Activated CD8-positive, alpha-beta T cell treated with anti-CD3 and anti-CD28 coated beads, Interleukin-2, amount 10 ng/mL, durations not matched to agents 7 days and 5 days (primary cell): ENCODE measurements at regions of chr1 and their contacts with region 1.

Region 1: DNA sequence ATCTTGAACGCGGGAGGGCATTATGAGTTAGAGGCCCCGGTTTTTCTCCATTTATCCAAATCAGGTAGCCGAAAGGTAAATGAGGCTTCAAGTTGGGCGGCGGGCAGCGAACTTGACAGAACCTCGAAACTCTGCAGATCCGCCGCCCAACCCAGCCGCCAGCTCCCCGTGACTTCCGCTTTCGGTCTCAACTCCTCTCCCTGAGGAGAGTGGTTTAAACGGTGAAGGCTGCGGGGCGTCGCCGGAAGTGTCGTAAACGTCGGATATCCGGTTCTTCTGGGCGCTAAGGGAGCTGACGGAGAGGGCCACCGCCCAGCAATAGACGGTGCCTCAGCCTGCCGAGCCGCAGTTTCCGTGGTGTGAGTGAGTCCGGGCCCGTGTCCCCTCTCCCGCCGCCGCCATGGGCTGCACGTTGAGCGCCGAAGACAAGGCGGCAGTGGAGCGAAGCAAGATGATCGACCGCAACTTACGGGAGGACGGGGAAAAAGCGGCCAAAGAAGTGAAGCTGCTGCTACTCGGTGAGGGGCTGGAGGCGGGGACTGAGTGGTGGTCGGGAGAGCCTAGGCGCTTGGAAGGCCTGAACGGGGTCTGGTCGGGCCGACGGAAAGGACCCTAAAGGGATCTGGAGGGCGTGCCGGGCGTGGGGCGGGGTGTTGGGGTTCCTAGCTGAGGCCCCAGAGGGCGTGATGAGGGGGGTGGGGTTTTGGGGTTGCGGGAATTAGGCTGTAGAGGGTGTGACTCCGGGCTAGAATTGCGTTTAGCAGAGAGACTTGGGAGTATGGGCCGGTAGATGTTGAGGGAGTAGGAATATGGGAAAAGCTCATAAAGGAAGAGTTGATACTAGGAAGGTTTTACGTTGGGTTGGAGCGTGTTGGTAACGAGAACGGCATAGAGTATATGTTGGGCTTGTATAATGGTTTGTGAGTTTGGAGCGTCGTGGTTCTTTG is at the start of gene GNAI3:
- DNase-seq: peak; percentile 98
- ATAC-seq: peak; percentile 92
- H3K4me3 Mint-ChIP-seq: peak within 1 kb of the TSS; percentile 97
- H3K27ac Mint-ChIP-seq: peak within 1 kb of the TSS; percentile 98
- H3K4me1 Mint-ChIP-seq: peaks cover 44% of the 10 kb centered on the region
- H3K27me3 Mint-ChIP-seq: no peaks in the 10 kb centered on the region
- total RNA-seq, gene GNAI3: 9.6 to 10.2 TPM

Region 2: DNA sequence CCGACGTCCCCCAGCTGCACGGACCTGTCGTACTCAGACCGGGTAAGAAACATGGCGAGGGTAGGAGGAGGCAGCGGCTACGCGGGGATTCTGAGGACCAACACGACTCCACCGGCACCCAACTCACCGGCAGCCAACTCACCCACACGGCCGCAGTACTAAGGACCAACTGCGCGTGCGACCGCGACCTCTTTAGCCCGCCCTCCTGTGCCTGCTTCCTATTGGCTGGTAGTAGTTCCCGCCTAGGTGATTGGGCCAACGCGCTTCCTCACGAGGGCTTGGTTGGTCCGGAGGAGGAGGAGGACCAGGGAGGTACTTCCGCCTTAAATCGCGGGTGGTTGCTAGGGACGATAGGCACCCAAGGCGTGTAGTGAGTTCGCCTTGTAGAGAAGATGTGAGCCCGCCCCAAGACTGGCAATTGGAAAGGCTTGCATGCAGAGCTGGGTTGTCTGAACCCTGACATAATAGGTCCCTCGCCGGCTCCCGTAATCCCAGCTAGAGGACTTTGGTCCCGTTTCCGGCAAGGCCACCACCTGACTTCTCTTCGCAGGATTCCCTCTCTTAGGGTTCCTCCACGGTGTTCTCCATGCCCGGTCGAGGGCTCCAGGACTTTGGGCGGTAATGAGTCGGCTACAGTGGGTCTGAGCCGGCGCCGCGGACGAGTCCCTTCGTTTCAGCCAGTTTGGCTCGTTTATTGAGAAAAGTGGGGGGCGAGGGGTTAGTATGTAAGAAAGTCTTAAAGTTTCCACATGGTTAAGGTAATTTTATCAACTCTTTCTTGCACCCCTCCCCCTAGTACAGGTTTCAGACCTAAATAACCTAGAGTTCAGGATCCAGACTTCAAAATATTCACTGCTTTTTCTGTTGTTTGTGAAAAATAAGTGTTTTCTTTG is 122.1 kb before region 1 on chr1 and contains the start of gene PSMA5:
- CTCF ChIA-PET with region 1: interaction called, 3 read pairs
- POLR2A ChIA-PET with region 1: interaction called, 14 read pairs
- DNase-seq: peak; percentile 98
- ATAC-seq: peak; percentile 94
- H3K4me3 Mint-ChIP-seq: peak within 1 kb of the TSS; percentile 95
- H3K27ac Mint-ChIP-seq: peak within 1 kb of the TSS; percentile 97
- H3K4me1 Mint-ChIP-seq: peaks cover 37% of the 10 kb centered on the region
- H3K27me3 Mint-ChIP-seq: no peaks in the 10 kb centered on the region
- total RNA-seq, gene PSMA5: 174 to 189 TPM

Region 3: GRCh38 chr1:109493805-109494539 is 54.6 kb before region 1 on chr1 and contains the start of gene CYB561D1:
- CTCF ChIA-PET with region 1: interaction called, 1,507 read pairs
- POLR2A ChIA-PET with region 1: interaction called, 13 read pairs
- DNase-seq: peak; percentile 91
- ATAC-seq: peak; percentile 91
- H3K4me3 Mint-ChIP-seq: peak within 1 kb of the TSS; percentile 97
- H3K27ac Mint-ChIP-seq: peak within 1 kb of the TSS; percentile 87
- H3K4me1 Mint-ChIP-seq: peaks cover 56% of the 10 kb centered on the region
- H3K27me3 Mint-ChIP-seq: no peaks in the 10 kb centered on the region
- total RNA-seq, gene CYB561D1: 19.0 to 19.8 TPM

Region 4: GRCh38 chr1:109559995-109560394 is 11.4 kb after region 1 on chr1:
- CTCF ChIA-PET with region 1: interaction called, 8 read pairs
- POLR2A ChIA-PET with region 1: interaction called, 11 read pairs
- DNase-seq: no peak
- ATAC-seq: no peak
- H3K4me3 Mint-ChIP-seq: no peak overlapping the region
- H3K27ac Mint-ChIP-seq: no peak overlapping the region
- H3K4me1 Mint-ChIP-seq: peaks cover 30% of the 10 kb centered on the region
- H3K27me3 Mint-ChIP-seq: no peaks in the 10 kb centered on the region

Region 5: GRCh38 chr1:109620841-109621286 is 72.3 kb after region 1 on chr1:
- CTCF ChIA-PET with region 1: interaction called, 34 read pairs
- POLR2A ChIA-PET with region 1: interaction called, 52 read pairs
- DNase-seq: peak; percentile 99
- ATAC-seq: peak; percentile 83
- H3K4me3 Mint-ChIP-seq: peak overlapping the region; percentile 95
- H3K27ac Mint-ChIP-seq: peak overlapping the region; percentile 96
- H3K4me1 Mint-ChIP-seq: peaks cover 74% of the 10 kb centered on the region
- H3K27me3 Mint-ChIP-seq: no peaks in the 10 kb centered on the region

Region 6: GRCh38 chr1:109630081-109630897 is 81.7 kb after region 1 on chr1:
- CTCF ChIA-PET with region 1: interaction called, 191 read pairs
- POLR2A ChIA-PET with region 1: interaction called, 22 read pairs
- DNase-seq: no peak
- ATAC-seq: no peak
- H3K4me3 Mint-ChIP-seq: no peak overlapping the region
- H3K27ac Mint-ChIP-seq: no peak overlapping the region
- H3K4me1 Mint-ChIP-seq: peaks cover 20% of the 10 kb centered on the region
- H3K27me3 Mint-ChIP-seq: no peaks in the 10 kb centered on the region

Region 7: DNA sequence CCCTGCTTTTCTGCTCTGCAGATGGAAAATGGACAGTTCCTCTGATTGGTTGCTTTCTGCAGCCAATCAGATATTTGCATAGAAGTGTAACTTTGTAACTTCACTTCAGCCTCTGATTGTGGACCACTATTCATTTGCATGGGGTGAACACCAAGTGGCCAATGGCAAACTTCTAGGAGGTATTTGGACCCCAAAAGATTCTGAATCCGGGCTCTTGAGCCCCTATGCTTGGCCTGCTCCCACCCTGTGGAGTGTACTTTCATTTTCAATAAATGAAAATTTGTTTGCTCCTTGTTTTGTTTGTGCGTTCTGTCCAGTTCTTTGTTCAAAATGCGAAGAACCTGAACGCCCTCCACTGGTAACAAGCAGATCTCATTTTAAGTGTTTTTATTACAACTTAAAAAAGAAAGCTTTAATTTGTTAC is 100.9 kb after region 1 on chr1:
- CTCF ChIA-PET with region 1: interaction called, 30 read pairs
- POLR2A ChIA-PET with region 1: interaction called, 3 read pairs
- DNase-seq: no peak
- ATAC-seq: no peak
- H3K4me3 Mint-ChIP-seq: no peak overlapping the region
- H3K27ac Mint-ChIP-seq: no peak overlapping the region
- H3K4me1 Mint-ChIP-seq: no peaks in the 10 kb centered on the region
- H3K27me3 Mint-ChIP-seq: peaks cover 32% of the 10 kb centered on the region